Posterior cingulate gyrus (tissue), 11 donors: ENCODE measurements at regions of chr3 and their contacts with region 1.

Region 1: GRCh38 chr3:150870396-150870795 is 34.8 kb downstream of the MINDY4B start:
- DNase-seq: no peak

Region 2: GRCh38 chr3:149990423-149990948 is 879.9 kb before region 1 on chr3:
- intact Hi-C with region 1: no loop called
- DNase-seq: no peak

Region 3: DNA sequence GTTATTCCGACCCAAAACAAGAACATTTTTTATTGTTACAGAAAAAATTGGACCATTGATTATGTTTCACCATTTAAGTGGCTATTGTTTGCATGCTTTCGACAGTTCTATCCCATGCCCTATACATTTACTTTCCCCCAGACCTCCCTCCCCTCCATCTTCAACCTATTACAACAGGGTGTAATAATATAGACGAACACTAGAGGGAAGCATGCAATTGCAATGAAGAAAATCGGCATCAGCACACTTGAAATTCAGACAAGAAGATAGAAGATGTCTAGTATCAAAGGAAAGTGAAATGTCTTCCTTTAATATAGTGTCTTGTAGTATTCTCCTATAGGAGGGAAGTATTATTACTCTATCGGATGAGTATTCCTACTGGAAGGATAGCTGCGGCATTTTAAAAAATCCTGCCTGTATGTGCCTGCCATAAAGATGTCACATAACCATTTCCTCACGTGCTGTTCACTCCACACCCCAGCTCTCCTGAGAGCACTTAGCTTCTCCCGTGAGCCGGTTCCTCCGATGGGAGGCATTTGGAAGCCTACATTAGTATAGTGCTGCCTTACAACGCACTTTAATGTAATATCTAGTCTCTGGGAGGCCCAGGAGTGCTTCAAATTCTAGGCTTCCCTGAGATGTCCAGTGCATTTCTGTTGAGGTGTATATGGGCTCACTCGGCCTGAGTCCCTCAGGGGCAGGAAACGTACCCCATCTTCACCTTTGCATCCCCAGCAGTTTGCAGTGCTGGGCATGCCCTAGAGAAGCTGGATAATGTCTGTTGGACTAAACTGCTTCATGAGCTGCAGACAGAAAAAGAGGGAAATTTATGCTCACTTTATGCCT is 148.9 kb before region 1 on chr3:
- intact Hi-C with region 1: loop called (anchors 1 kb)
- DNase-seq: peak in 1 of 10 donors; percentile 59

Region 4: GRCh38 chr3:150787741-150788370 is 82.5 kb before region 1 on chr3:
- intact Hi-C with region 1: loop called (anchors 1 kb)
- DNase-seq: peak; percentile 74 to 97 (median 88)